Head of caudate nucleus (tissue), 42 donors: ENCODE measurements at regions of chr14 and their contacts with region 1.

Region 1: DNA sequence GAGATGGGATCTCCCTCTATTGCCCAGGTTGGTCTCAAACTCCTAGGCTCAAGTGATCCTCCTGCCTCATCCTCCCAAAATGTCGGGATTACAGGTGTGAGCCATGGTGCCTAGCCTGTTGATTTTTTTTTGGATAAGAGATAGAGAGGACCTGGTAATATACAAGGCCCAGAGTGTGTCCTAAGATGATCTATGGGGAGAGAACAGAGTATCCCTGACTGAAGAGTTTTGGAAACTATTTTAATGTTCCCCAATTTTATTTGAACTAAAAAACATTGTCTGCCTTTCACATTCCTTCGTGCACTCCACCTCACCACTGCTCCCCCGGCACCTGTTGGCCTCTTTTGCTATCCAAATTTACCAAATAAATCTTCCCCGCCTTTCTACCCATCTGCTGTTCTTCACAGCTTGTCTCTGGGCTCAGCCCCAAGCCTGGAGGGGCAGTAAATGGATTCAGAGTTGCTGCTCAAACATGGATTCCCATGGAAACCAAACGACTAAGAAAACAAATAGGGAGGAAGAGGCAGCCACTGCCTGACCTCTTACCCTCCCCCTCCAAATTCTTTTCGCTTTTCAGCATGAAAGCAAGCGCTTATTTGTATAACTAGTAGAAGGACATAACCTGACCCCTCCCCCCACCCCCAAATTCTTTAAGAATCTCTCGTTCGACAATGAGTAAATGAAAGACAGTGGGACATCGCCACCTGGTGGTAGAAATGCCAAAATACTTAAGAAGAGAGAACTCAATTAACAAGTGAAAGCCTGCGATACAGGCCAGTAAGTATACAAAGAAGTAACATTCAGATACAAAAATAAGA is 22.6 kb downstream of the OR10G3 start:
- DNase-seq: peak in 41 of 42 donors; percentile 15 to 94 (median 76)

Region 2: DNA sequence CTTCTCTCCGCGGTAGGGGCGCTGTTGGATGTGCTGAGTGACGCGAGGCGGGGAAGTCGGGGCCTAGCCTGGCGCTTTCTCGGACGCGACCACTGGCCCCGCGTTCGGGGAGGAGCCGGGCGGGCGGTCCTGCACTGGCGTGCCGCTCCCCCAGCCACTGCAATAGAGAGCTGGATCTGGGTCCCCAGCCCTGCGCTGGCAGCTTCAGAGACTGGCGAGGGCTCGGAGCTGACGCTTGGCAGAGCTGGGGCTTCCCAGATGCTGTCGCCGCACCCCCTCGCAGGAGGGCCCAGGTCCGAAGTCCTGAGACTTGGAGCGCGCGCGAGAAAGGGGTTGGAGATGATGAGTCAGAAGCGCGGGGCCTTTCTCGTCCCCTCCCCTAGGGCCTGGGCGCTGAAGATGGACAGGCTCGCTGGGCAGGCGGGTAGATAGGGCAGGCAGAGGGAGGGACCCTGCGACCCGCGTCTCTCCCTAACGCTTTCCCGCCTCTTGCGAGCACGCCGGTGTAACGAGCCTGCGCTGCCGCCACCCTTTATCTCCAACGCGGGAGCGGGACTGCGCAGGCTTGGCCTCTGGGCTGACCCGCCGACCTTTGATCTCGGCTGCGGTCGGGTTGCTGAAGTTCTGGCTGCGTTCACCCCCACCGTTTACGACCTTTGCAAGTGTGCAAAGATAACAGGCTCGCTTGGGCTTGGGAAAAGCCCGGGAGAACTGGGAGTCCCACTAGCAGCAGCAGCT is 453.4 kb before region 1 on chr14:
- intact Hi-C with region 1: loop called (anchors 10 kb)
- DNase-seq: peak; percentile 93 to 99 (median 98)

Region 3: GRCh38 chr14:21505012-21505553 is 52.2 kb before region 1 on chr14:
- intact Hi-C with region 1: loop called (anchors 10 kb)
- DNase-seq: no peak